Activated CD4-positive, alpha-beta T cell treated with anti-CD3 and anti-CD28 coated beads, Interleukin-2, amount 10 ng/mL, durations not matched to agents 24 days and 14 days (primary cell): ENCODE measurements at regions of chr4 and their contacts with region 1.

Region 1: DNA sequence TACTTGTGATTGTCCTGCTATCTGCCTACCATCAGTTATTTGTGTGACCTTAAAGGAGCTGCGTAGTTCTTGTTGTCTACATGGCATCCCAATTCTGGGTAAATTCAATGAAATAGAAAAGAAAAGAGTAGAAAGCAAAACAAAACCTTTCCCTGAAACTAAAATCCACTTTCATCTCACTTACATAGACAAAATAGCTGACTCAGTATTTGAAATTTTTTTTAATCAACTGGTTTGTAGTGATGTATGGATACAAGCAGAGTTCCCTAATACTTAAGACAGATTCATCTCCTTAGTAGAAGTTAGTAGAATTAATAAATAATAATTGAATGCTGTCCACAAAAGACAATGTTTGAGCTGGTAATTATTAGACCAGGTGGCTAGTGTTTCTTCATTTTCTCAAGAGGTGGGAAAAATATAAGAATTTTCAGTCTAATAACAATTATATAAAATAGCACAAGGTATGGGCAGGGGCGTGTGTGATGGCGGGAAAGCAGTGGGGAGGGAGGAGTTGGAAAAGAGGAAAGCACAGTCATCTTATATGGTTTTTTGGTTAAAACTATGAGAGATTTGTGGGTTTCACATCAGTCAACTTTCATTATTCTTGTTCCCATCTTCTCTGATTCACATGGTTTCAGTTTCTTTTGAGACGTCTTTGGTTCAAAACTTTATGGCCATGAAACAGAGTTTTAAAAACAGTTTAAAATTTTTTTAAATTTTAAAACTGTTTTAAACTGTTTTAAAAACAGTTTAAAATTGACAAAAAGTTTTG is 275.2 kb downstream of the SPRY1 start:
- DNase-seq: peak; percentile 74
- H3K4me3 Mint-ChIP-seq: peak overlapping the region; percentile 24
- H3K27ac Mint-ChIP-seq: peak overlapping the region; percentile 72
- H3K4me1 Mint-ChIP-seq: peaks cover 21% of the 10 kb centered on the region
- H3K27me3 Mint-ChIP-seq: peaks cover 67% of the 10 kb centered on the region

Region 2: DNA sequence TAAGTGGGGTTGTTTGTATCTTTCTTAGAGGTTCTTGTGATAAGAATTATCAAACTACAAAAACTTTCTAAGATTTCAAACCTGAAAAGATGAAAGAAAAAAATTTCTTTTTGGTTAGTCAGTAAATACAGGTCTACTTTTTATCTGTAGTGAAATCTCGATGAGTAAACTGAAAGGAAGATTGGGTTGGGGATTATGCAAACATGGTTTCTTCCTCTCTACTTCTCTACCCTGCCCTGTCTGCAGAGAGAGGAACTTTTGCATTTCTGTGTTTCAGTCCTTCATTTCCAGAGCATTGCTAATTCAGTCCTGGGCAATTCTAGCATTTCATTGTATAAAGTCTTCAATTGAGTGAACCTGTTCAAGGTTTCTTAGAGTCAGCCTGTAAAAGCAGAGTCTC is 1163.7 kb before region 1 on chr4:
- intact Hi-C with region 1: loop called (anchors 10 kb)
- DNase-seq: peak; percentile 70
- H3K4me3 Mint-ChIP-seq: peak overlapping the region; percentile 65
- H3K27ac Mint-ChIP-seq: peak overlapping the region; percentile 82
- H3K4me1 Mint-ChIP-seq: peaks cover 55% of the 10 kb centered on the region
- H3K27me3 Mint-ChIP-seq: no peaks in the 10 kb centered on the region

Region 3: DNA sequence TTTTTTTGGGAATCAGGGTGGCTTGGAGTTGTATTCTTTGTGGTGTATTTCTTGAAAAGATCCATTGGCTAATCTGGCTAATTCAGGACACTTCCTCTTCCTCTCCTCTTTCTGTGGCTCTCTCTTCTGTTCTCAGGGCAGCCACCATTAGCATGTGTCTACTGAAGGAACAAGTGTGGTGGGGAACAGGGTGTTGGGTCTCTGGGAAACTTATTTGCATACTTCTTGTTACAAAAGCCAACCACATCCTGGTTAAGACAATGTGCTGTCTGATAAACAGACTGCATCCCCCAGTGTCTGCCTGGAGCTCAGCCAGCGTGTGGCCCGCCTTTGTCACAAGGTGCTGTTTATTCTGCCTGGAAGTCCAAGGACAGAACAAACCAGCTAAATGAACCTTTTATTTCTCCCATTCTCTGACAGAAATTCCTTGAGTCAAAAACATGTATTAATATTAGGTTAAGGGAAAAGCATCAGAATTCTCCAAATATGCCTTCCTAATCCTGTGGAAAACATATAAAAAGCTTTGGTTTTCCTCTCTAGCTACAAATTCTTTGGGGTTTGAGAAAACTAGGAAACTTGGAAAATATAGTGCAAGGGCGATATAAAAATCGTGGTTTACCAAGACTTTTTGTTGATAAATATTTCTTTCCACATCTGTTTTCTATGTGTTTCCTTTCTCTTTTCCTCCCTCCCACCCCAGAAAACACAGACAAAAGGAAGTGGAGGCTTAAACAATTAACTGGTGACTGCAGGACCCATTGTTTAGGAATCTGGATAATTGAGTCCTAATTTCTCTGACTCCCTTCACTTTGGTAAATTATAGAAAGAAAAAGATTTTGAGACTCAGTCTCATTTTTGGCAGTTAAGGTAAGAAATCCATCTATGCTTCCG is 71.7 kb before region 1 on chr4:
- intact Hi-C with region 1: loop called (anchors 5 kb)
- DNase-seq: peak; percentile 83
- H3K4me3 Mint-ChIP-seq: peak overlapping the region; percentile 51
- H3K27ac Mint-ChIP-seq: peak overlapping the region; percentile 76
- H3K4me1 Mint-ChIP-seq: peaks cover 33% of the 10 kb centered on the region
- H3K27me3 Mint-ChIP-seq: peaks cover 2% of the 10 kb centered on the region

Region 4: GRCh38 chr4:123640271-123640670 is 31.5 kb before region 1 on chr4:
- intact Hi-C with region 1: loop called (anchors 1 kb)
- DNase-seq: no peak
- H3K4me3 Mint-ChIP-seq: no peak overlapping the region
- H3K27ac Mint-ChIP-seq: peak overlapping the region; percentile 87
- H3K4me1 Mint-ChIP-seq: peaks cover 4% of the 10 kb centered on the region
- H3K27me3 Mint-ChIP-seq: peaks cover 10% of the 10 kb centered on the region